CD4-positive, alpha-beta T cell (primary cell): ENCODE measurements at regions of chr12 and their contacts with region 1.

Region 1: DNA sequence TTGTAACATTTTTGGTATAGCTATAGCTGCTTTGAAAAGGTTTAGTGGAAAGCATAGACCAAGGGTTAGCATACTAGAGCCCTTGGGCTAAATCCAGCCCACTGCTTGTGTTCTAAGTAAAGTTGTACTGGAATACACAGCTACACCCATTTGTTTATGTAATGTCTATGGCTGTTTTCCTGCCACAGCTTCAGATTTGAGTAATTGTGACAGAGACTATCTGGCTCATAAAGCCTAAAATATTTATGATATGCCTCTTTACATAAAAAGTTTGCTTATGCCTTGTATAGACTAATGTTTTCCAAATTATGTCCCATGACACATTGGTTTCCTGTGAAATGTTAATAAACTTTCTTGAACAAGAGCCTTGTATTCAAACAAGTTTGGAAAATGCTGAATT is 234.8 kb upstream of the ATP2B1 start:
- DNase-seq: no peak
- ATAC-seq: no peak
- H3K4me3 ChIP-seq: no peak overlapping the region
- H3K4me3 Mint-ChIP-seq: no peak overlapping the region
- H3K27ac ChIP-seq: peak overlapping the region in 1 of 2 donors; percentile 57
- H3K27ac Mint-ChIP-seq: peak overlapping the region; percentile 12
- H3K4me1 ChIP-seq: peaks cover 13% of the 10 kb centered on the region
- H3K4me1 Mint-ChIP-seq: peaks cover 33% of the 10 kb centered on the region
- H3K27me3 ChIP-seq: no peaks in the 10 kb centered on the region
- H3K27me3 Mint-ChIP-seq: no peaks in the 10 kb centered on the region
- CTCF ChIP-seq: no peak

Region 2: DNA sequence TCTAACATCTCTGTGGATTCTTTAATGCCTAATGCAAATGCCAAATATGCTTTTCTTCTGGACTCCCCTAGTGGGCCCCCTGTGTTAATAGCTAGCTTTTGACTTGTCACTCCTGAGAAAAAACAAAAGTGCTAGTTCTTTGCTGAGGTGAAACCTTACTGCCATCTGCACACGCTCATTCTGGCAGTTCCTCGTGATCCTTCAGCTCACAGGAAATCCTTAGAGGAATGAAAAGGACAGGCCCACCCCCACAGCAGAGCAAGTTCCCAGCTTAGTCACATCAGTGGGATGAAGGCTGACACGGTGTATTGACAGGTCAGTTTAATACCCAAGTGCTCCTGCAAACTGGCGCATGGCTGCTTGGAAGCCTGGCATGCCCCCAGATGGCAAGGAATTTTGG is 69.7 kb before region 1 on chr12:
- CTCF ChIA-PET with region 1: interaction called, 3 read pairs
- POLR2A ChIA-PET with region 1: no interaction called
- intact Hi-C with region 1: loop called in 1 of 2 experiments (anchors 5 kb)
- DNase-seq: no peak
- ATAC-seq: no peak
- H3K4me3 ChIP-seq: no peak overlapping the region
- H3K4me3 Mint-ChIP-seq: no peak overlapping the region
- H3K27ac ChIP-seq: no peak overlapping the region
- H3K27ac Mint-ChIP-seq: no peak overlapping the region
- H3K4me1 ChIP-seq: no peaks in the 10 kb centered on the region
- H3K4me1 Mint-ChIP-seq: peaks cover 19% of the 10 kb centered on the region
- H3K27me3 ChIP-seq: no peaks in the 10 kb centered on the region
- H3K27me3 Mint-ChIP-seq: no peaks in the 10 kb centered on the region
- CTCF ChIP-seq: no peak